PC-3 (cell line): ENCODE measurements at regions of chr5 and their contacts with region 1.

Region 1: DNA sequence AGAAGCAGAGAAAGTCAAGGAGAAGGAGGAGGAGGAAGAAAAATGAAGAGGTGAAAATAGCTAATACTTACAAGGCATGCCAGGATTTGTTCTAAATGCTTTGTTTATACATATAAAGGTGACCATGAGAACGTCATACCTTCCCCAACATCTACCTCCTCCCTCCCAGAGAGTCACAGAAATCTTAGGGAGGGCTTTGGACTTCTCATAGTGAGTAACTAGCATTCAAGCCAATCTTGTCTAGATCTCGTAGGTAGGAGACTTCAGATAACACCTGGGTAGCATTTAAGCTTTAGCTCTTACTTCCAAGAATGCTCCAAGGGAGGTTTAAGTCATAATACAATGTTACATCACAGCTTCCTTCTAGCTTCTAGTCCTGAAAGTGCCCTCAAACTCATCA is 36.5 kb upstream of the GPBP1 start:
- DNase-seq: no peak
- ATAC-seq: no peak
- H3K4me3 ChIP-seq: no peak overlapping the region
- H3K27ac ChIP-seq: no peak overlapping the region
- H3K4me1 ChIP-seq: no peaks in the 10 kb centered on the region
- H3K27me3 ChIP-seq: no peaks in the 10 kb centered on the region
- CTCF ChIP-seq: no peak

Region 2: DNA sequence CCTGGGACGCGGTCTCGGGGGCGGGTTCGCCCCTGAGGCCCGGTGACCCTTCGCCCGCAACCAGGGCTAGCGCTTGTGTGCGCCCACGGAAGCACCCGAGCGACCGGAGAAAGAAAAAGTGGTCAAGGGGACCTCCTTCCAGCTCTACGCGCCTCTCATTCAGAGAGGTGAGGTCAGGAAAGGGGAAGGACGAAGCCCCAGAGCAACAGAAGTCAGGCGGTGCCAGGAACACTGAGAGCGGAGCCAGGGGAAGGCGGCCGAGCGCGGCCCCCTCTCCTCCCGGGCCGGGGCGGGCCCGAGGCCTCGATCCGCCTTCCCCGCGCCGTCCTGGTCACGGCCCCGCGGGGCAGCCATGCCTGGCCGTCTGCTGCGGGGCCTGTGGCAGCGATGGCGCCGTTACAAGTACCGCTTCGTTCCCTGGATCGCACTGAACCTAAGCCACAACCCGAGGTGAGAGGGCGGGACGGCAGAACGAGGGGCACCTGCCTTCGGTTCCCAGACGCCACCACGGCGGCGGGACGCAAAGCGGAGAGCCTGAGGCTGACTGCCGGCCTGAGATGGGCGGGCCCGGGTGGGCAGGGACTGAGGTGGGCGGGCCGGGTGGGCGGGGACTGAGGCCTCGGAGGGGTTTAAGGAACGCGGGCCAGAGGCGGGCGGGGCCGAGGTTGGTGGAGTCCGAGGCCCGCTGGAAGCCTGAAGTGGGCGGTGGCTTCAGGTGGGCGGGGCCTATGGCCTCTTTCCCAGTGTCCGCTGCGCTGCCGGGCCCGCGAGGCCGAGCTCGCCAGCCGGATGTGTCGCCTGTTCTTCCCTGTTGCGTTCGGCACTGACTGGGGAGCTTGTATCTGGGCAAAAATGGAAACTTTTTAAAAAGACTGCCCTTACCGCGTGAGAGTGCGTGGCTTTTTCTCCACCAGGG is 227.8 kb before region 1 on chr5 and contains the start of gene SETD9:
- CTCF ChIA-PET with region 1: no interaction called
- POLR2A ChIA-PET with region 1: no interaction called
- intact Hi-C with region 1: no loop called
- DNase-seq: peak; percentile 92
- ATAC-seq: peak; percentile 88
- H3K4me3 ChIP-seq: peak within 1 kb of the TSS; percentile 83
- H3K27ac ChIP-seq: peak within 1 kb of the TSS; percentile 69
- H3K4me1 ChIP-seq: peaks cover 6% of the 10 kb centered on the region
- H3K27me3 ChIP-seq: no peaks in the 10 kb centered on the region
- CTCF ChIP-seq: no peak
- total RNA-seq, gene SETD9: 4.5 and 6.0 TPM in 2 replicates

Region 3: DNA sequence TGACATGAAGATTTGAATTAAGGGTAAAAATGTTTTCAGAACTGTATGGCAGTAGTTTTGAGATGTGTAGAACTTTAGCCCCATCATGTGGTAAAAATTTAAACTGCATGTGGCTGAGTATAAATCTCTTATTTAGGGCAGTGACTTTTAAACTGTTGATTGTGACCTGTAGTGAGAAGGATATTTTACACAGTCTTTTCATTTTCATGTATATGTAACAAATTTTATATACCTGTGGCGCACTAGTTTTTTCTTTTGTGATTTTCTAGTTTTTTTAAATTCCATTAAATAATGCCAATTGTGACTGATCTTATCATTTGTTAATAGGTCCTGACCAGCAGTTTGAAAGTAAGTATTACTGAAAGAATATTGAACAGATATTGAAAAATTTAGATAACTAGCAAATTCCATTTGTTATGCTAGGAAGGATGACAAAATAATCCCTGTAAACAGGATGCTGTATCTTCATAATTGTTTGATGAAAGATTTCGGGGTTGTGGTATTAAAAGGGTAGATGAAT is 83.7 kb after region 1 on chr5:
- CTCF ChIA-PET with region 1: no interaction called
- POLR2A ChIA-PET with region 1: no interaction called
- intact Hi-C with region 1: loop called (anchors 2 kb)
- DNase-seq: peak; percentile 72
- ATAC-seq: peak; percentile 56
- H3K4me3 ChIP-seq: no peak overlapping the region
- H3K27ac ChIP-seq: no peak overlapping the region
- H3K4me1 ChIP-seq: peaks cover 10% of the 10 kb centered on the region
- H3K27me3 ChIP-seq: no peaks in the 10 kb centered on the region
- CTCF ChIP-seq: peak; percentile 76